H1 (cell line): ENCODE measurements at regions of chr10 and their contacts with region 1.

Region 1: DNA sequence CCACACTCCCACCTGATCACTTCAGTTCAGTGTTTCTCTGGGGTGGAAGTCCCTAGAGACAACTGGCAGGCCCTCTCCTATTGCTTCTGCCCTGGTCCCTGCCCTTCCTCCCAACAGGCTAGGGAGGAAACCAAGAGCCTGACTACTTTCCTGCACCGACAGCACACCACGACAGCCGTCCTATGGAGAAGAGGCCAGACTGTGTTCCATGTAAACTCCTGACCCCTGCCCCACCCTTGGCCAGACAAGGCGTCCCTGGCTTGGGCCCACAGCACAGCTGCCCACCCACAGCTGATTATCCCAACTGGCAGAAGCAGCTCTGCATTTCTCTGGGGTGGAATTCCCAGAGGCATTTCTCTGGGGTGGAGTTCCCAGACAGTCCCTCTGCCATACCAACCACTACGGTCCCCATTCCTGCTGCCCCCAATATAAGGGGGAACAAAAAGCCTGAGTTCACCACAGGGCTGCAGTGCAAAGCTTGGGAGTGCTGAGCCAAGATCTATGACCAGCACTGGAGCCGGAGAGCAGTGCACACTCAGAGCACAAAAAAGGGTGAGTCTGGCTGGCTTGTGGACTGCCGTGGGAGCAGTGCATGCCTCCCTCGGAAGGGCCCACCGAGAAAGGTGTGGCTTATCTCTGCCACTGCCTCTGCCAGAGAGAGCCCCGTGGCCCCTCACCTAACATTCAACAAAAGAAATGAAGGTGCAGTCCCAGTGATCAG is 193.4 kb downstream of the HPSE2 start:
- DNase-seq: no peak
- H3K4me3 ChIP-seq: no peak overlapping the region
- H3K27ac ChIP-seq: no peak overlapping the region
- H3K4me1 ChIP-seq: no peaks in the 10 kb centered on the region
- H3K27me3 ChIP-seq: no peaks in the 10 kb centered on the region
- CTCF ChIP-seq: no peak
- EP300 ChIP-seq: no peak
- POLR2A ChIP-seq: no peak
- RAD21 ChIP-seq: no peak

Region 2: GRCh38 chr10:98467506-98468346 is 574.5 kb before region 1 on chr10:
- CTCF ChIA-PET with region 1: interaction called, 24 read pairs
- POLR2A ChIA-PET with region 1: no interaction called
- DNase-seq: peak; percentile 46 to 70
- H3K4me3 ChIP-seq: peak overlapping the region; percentile 5 to 54 (median 28); a peak in 7 of 8 replicates
- H3K27ac ChIP-seq: no peak overlapping the region
- H3K4me1 ChIP-seq: peaks cover 0 to 13% (median 2%) of the 10 kb centered on the region in 4 experiments; a peak in 4 of 7 replicates
- H3K27me3 ChIP-seq: peaks cover 0 to 4% (median 1%) of the 10 kb centered on the region in 4 experiments; a peak in 2 of 7 replicates
- CTCF ChIP-seq: peak; percentile 72 to 91 (median 83)
- EP300 ChIP-seq: no peak
- POLR2A ChIP-seq: no peak
- RAD21 ChIP-seq: peak; percentile 94 to 97

Region 3: DNA sequence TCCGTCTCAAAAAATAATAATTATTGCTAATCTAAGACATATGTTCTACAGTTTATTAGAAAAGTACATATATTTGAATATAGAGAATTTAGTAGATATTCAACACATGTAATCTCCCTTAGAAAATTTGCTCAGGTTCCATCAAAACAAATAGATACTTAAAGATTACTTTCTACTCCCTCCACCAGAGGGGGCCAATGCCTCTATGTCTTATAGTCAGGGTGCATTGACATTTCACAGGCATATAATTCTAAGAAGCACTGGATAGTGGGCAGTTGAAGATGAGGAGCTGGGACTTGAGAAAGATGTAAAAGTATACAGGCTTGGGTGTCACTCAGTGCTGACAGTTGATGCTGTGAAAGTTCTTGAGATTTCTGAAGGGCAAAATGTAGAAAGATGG is 293.9 kb before region 1 on chr10:
- CTCF ChIA-PET with region 1: interaction called, 11 read pairs
- POLR2A ChIA-PET with region 1: no interaction called
- DNase-seq: peak; percentile 2 to 47
- H3K4me3 ChIP-seq: no peak overlapping the region
- H3K27ac ChIP-seq: no peak overlapping the region
- H3K4me1 ChIP-seq: no peaks in the 10 kb centered on the region
- H3K27me3 ChIP-seq: no peaks in the 10 kb centered on the region
- CTCF ChIP-seq: peak in 2 of 3 experiments; percentile 41 to 55; a peak in 2 of 4 replicates
- EP300 ChIP-seq: no peak
- POLR2A ChIP-seq: no peak
- RAD21 ChIP-seq: peak; percentile 66 to 70

Region 4: DNA sequence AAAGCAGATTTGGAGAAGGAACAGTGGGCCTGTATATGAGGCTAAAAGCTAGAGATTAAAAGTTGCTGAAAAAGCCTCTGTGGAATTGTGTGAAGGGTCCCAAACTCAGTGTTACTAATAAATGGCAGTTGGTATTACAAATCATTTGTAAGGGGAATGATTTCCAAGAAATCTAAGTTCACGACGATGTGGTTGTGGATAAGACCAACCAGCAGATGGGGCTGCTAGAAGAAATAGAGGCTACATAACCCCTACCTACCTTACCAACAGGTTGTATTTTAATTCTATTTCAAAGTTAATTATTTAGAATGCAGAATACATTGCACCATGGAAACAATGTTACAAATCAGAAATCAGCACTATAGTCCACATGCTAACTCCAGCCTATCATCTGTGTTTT is 183.7 kb before region 1 on chr10:
- CTCF ChIA-PET with region 1: interaction called, 10 read pairs
- POLR2A ChIA-PET with region 1: no interaction called
- DNase-seq: no peak
- H3K4me3 ChIP-seq: no peak overlapping the region
- H3K27ac ChIP-seq: no peak overlapping the region
- H3K4me1 ChIP-seq: no peaks in the 10 kb centered on the region
- H3K27me3 ChIP-seq: no peaks in the 10 kb centered on the region
- CTCF ChIP-seq: peak in 2 of 3 experiments; percentile 31 to 46; a peak in 2 of 4 replicates
- EP300 ChIP-seq: no peak
- POLR2A ChIP-seq: no peak
- RAD21 ChIP-seq: peak; percentile 44 to 48

Region 5: GRCh38 chr10:99057936-99058690 is 15.9 kb after region 1 on chr10:
- CTCF ChIA-PET with region 1: interaction called, 11 read pairs
- POLR2A ChIA-PET with region 1: no interaction called
- DNase-seq: no peak
- H3K4me3 ChIP-seq: no peak overlapping the region
- H3K27ac ChIP-seq: no peak overlapping the region
- H3K4me1 ChIP-seq: no peaks in the 10 kb centered on the region
- H3K27me3 ChIP-seq: no peaks in the 10 kb centered on the region
- CTCF ChIP-seq: no peak
- EP300 ChIP-seq: no peak
- POLR2A ChIP-seq: no peak
- RAD21 ChIP-seq: no peak